Body of pancreas (tissue), 4 donors: ENCODE measurements at regions of chr15 and their contacts with region 1.

Region 1: GRCh38 chr15:79184465-79184892 is 93.9 kb upstream of the RASGRF1 start:
- DNase-seq: peak; percentile 71 to 79 (median 72)
- ATAC-seq: peak; percentile 62
- H3K4me3 ChIP-seq: no peak overlapping the region
- H3K27ac ChIP-seq: no peak overlapping the region
- H3K4me1 ChIP-seq: no peaks in the 10 kb centered on the region
- H3K27me3 ChIP-seq: no peaks in the 10 kb centered on the region
- CTCF ChIP-seq: peak; percentile 85 to 95 (median 87)
- POLR2A ChIP-seq: no peak

Region 2: GRCh38 chr15:78315686-78316282 is 868.7 kb before region 1 on chr15:
- intact Hi-C with region 1: no loop called
- DNase-seq: no peak
- ATAC-seq: no peak
- H3K4me3 ChIP-seq: no peak overlapping the region
- H3K27ac ChIP-seq: no peak overlapping the region
- H3K4me1 ChIP-seq: no peaks in the 10 kb centered on the region
- H3K27me3 ChIP-seq: no peaks in the 10 kb centered on the region
- CTCF ChIP-seq: no peak
- POLR2A ChIP-seq: no peak

Region 3: GRCh38 chr15:78909791-78910228 is 274.7 kb before region 1 on chr15:
- intact Hi-C with region 1: loop called (anchors 10 kb)
- DNase-seq: peak in 3 of 4 donors; percentile 39 to 43 (median 43)
- ATAC-seq: peak; percentile 38
- H3K4me3 ChIP-seq: no peak overlapping the region
- H3K27ac ChIP-seq: no peak overlapping the region
- H3K4me1 ChIP-seq: peaks cover 28% of the 10 kb centered on the region
- H3K27me3 ChIP-seq: no peaks in the 10 kb centered on the region
- CTCF ChIP-seq: peak; percentile 29 to 73 (median 51)
- POLR2A ChIP-seq: no peak

Region 4: GRCh38 chr15:79028411-79028964 is 156.0 kb before region 1 on chr15:
- intact Hi-C with region 1: loop called (anchors 10 kb)
- DNase-seq: peak in 3 of 4 donors; percentile 27 to 44 (median 38)
- ATAC-seq: no peak
- H3K4me3 ChIP-seq: no peak overlapping the region
- H3K27ac ChIP-seq: no peak overlapping the region
- H3K4me1 ChIP-seq: no peaks in the 10 kb centered on the region
- H3K27me3 ChIP-seq: no peaks in the 10 kb centered on the region
- CTCF ChIP-seq: peak in 6 of 7 experiments; percentile 53 to 69 (median 58)
- POLR2A ChIP-seq: no peak

Region 5: DNA sequence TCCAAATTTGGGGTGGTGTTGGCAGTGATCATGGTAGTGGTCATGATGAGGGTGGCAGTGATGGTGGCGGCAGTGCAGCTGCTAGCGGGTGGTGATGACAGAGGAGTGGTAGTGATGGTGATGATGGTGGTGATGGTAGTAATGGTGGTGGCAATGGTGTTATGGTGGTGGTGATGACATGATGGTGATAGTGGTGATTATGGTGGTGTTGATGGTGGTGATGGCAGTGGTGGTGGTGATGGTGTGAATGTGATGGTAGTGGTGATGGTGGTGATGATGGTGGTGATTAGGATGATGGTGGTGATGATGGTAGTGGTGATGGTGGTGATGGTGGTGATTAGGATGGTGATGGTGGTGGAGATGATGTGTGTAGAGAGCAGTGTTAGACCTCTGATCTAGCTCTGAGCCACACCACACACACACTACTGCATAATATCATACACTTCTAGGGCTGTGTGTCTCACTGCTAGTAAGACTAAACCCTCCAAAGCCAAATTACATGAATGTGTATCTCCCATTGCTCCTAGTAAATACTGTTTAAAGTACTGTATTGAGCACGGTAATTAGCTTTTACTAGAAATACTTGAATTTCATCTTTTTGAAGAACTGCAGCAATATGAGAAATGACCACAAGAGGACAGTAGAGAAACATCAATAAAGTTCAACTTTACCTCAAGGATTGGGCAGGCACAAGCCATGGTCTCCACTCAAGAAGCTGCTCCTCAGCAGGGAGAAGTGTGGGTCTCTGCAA is 155.3 kb after region 1 on chr15:
- intact Hi-C with region 1: no loop called
- DNase-seq: no peak
- ATAC-seq: no peak
- H3K4me3 ChIP-seq: no peak overlapping the region
- H3K27ac ChIP-seq: no peak overlapping the region
- H3K4me1 ChIP-seq: no peaks in the 10 kb centered on the region
- H3K27me3 ChIP-seq: no peaks in the 10 kb centered on the region
- CTCF ChIP-seq: peak; percentile 65 to 87 (median 81)
- POLR2A ChIP-seq: no peak